ENCODE measurements at regions of chr11 and their contacts with region 1.

Region 1: DNA sequence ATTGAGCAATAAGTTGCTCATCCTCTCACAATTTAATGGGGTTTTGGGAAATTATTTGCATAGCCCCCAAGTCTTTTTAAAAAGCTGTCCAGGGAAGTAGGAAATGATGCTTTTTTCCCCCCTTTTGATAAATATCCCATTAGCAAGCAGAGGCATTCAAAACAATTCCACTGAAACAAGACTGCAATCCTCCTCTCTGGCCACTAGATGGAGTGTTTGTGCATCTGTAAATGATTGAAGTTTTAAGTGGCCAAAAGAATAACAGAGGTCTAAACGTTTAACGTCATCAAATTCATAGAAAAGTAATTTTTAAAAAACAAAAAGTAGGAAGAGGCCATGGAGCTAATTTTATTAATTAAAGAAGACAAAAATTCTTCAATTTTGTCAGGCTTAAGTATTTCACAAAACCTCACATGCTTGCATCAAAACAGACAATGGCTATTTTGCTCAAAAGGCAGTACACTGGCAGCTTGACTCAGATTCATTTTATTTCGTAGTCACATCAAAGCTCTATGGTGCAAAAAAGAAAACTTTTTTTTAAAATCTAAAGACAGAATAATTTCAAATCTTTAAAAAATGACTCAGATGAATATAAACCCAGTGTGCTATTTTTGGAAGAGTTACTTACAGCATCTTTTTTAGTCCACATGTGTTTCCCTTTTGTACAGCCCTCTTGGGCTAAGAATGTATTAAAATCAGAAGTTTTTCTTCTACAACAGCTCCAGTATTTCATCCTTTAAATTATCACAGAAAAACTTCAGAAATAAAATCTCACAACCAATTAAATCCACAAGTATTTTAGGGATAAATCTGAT is 17.8 kb downstream of the CHORDC1 start:
- DNase-seq: peak in 1 of 2 donors; percentile 73
- ATAC-seq: peak; percentile 67 to 80 (median 77)
- H3K4me3 ChIP-seq: no peak overlapping the region
- H3K4me3 Mint-ChIP-seq: no peak overlapping the region
- H3K27ac ChIP-seq: no peak overlapping the region
- H3K27ac Mint-ChIP-seq: peak overlapping the region in 1 of 2 donors; percentile 25
- H3K4me1 ChIP-seq: no peaks in the 10 kb centered on the region
- H3K4me1 Mint-ChIP-seq: peaks cover 9 to 14% of the 10 kb centered on the region in 2 donors
- H3K27me3 ChIP-seq: no peaks in the 10 kb centered on the region
- H3K27me3 Mint-ChIP-seq: no peaks in the 10 kb centered on the region
- CTCF ChIP-seq: peak; percentile 97

Region 2: DNA sequence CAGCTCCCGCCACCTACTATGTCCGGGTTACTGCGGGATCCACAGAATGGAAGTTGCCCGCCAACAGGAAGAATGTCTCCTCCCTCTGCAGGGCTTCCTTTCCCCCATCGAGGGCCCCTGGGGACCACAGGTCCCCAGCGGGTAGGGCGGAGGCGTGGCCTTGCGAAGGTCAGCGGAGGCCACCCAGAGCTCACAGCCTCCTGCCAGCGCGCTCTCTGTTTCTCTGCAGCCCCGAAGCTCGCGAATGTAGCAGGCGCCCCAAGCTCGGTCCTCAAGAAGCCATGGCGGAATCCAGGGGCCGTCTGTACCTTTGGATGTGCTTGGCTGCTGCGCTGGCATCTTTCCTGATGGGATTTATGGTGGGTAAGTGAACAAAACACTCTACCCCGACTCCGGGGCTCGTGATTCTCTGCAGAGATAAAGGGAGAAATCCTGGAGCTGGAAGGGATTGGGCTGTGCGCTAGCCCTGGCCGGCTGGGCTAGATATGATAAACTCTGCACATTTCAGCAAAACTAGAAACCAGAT is 70.5 kb before region 1 on chr11 and contains the start of gene NAALAD2:
- intact Hi-C with region 1: no loop called
- DNase-seq: peak in 1 of 2 donors; percentile 1
- ATAC-seq: peak in 1 of 3 donors; percentile 15
- H3K4me3 ChIP-seq: no peak within 1 kb of the TSS
- H3K4me3 Mint-ChIP-seq: peak within 1 kb of the TSS; percentile 51
- H3K27ac ChIP-seq: no peak within 1 kb of the TSS
- H3K27ac Mint-ChIP-seq: no peak within 1 kb of the TSS
- H3K4me1 ChIP-seq: peaks cover 6% of the 10 kb centered on the region
- H3K4me1 Mint-ChIP-seq: peaks cover 0 to 10% of the 10 kb centered on the region in 2 donors
- H3K27me3 ChIP-seq: peaks cover 12% of the 10 kb centered on the region
- H3K27me3 Mint-ChIP-seq: peaks cover 12 to 15% of the 10 kb centered on the region in 2 donors
- CTCF ChIP-seq: no peak
- total RNA-seq, gene NAALAD2: not detected

Region 3: DNA sequence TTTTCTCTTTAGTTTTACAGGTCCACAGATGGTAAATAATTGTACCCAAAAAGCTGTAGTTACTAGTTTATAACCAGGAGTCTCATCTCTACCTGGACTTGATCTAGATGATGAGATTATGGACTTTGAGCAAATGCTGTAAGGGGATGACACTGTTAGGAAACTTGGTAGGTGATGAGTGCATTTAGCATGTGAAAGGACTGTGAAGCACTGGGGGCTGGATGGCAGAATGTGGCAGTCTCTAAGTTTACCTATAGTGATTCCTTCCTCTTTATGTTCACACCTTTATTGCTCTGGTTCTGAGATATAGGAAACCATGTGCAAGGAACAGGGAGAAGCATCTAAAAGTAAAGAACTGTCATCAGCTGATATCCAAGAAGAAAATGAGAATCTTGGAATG is 248.5 kb after region 1 on chr11:
- intact Hi-C with region 1: loop called (anchors 5 kb)
- DNase-seq: no peak
- ATAC-seq: no peak
- H3K4me3 ChIP-seq: no peak overlapping the region
- H3K4me3 Mint-ChIP-seq: no peak overlapping the region
- H3K27ac ChIP-seq: no peak overlapping the region
- H3K27ac Mint-ChIP-seq: no peak overlapping the region
- H3K4me1 ChIP-seq: no peaks in the 10 kb centered on the region
- H3K4me1 Mint-ChIP-seq: no peaks in the 10 kb centered on the region
- H3K27me3 ChIP-seq: no peaks in the 10 kb centered on the region
- H3K27me3 Mint-ChIP-seq: no peaks in the 10 kb centered on the region
- CTCF ChIP-seq: no peak